Ascending aorta (tissue), 2 donors: ENCODE measurements at regions of chr17 and their contacts with region 1.

Region 1: DNA sequence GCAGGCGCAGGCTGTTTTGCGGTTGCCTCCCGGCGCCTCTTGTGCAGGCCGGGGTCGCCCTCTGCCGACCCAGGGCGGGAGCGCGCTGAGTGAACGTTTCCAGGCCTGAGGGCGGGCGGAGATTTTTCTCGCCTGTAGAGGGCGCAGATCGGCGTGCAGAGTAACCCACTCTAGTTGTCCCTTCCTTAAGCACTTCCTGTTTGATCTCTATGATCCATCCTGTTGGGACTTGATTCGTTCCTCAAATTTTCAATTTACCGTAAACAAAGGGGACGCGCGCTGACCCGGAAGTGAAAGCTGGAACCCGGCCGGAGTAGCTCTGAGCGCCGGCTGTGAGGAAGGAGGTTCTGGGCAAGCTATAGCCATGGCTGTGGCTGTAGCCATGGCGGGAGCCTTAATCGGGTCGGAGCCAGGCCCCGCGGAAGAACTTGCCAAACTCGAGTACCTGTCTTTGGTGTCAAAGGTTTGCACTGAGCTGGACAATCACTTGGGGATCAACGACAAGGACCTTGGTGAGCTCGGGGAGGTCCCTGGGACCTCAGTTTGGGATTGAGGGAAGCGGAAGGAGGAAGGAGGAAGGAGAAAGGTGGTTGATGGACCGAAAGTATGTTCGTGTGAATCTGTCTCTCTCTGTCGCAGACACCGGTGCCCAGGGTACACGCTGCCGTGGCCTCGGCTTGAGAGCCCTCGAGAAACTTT is at the start of gene DHX8:
- DNase-seq: peak; percentile 87 to 98
- H3K4me3 ChIP-seq: peak within 1 kb of the TSS; percentile 71 to 83
- H3K27ac ChIP-seq: peak within 1 kb of the TSS; percentile 71 to 80
- H3K4me1 ChIP-seq: peaks cover 3 to 24% of the 10 kb centered on the region in 2 donors
- H3K27me3 ChIP-seq: no peaks in the 10 kb centered on the region
- CTCF ChIP-seq: peak; percentile 100
- total RNA-seq, gene DHX8: 50.0 TPM

Region 2: DNA sequence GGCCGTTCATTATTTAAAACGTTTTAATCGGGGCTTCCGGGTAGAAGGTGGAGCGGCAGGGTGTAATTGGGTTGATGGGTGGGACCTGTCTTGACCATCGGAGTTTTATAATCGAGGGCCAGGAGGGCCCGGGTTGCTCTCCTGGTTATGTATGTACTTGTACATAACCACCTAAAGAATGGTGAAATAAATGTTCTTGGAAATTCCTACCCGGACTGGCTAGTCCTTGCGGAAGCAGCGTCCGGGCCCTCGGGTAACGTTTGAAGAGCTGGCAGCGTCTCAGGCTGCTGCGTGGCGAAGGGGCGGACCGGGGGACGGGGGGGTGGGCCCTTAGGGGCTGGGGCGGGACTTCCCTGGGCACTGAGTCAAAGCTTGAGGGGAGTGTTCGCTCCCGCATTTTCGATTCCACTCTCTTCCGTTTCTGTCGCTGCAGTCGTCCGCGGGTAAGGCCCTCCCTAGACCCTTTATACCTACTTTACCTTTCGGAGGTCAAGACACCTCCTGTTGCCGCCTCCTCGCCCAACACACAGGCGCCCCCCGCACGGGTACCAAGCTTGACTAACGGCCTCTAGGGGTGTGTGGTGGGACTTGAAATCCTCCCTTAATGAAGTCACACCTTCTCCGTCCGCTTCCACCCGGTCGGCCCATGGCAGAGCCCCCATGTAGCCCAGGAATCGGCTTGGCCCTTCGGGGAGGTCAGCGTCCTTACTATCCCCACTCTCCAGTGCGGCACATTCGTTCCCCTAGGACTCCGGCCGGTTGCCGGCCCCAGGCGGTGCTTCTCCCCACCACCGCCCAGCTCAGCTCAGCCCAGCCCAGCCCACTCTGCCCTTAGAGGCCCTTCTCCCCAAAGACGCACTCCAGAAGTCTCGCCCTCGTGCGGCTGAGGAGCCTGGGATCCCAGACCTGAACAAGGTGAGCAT is 272.1 kb before region 1 on chr17 and contains the start of gene TMEM106A:
- intact Hi-C with region 1: loop called (anchors 5 kb)
- DNase-seq: peak; percentile 39 to 89
- H3K4me3 ChIP-seq: peak within 1 kb of the TSS; percentile 74 to 76
- H3K27ac ChIP-seq: peak within 1 kb of the TSS; percentile 80 to 83
- H3K4me1 ChIP-seq: peaks cover 0 to 12% of the 10 kb centered on the region in 2 donors
- H3K27me3 ChIP-seq: no peaks in the 10 kb centered on the region
- CTCF ChIP-seq: peak; percentile 25 to 50 (median 47)
- total RNA-seq, gene TMEM106A: 18.5 TPM

Region 3: GRCh38 chr17:43316522-43317142 is 167.2 kb before region 1 on chr17:
- intact Hi-C with region 1: loop called (anchors 10 kb)
- DNase-seq: peak in 1 of 2 donors; percentile 63
- H3K4me3 ChIP-seq: no peak overlapping the region
- H3K27ac ChIP-seq: no peak overlapping the region
- H3K4me1 ChIP-seq: peaks cover 0 to 2% of the 10 kb centered on the region in 2 donors
- H3K27me3 ChIP-seq: no peaks in the 10 kb centered on the region
- CTCF ChIP-seq: no peak

Region 4: GRCh38 chr17:43367737-43368242 is 116.0 kb before region 1 on chr17:
- intact Hi-C with region 1: loop called (anchors 1 kb)
- DNase-seq: peak in 1 of 2 donors; percentile 66
- H3K4me3 ChIP-seq: peak overlapping the region; percentile 62 to 70
- H3K27ac ChIP-seq: peak overlapping the region; percentile 100
- H3K4me1 ChIP-seq: peaks cover 2 to 18% of the 10 kb centered on the region in 2 donors
- H3K27me3 ChIP-seq: no peaks in the 10 kb centered on the region
- CTCF ChIP-seq: no peak

Region 5: GRCh38 chr17:43393944-43394482 is 89.8 kb before region 1 on chr17:
- intact Hi-C with region 1: loop called (anchors 1 kb)
- DNase-seq: peak; percentile 46 to 96
- H3K4me3 ChIP-seq: peak overlapping the region in 1 of 2 donors; percentile 34
- H3K27ac ChIP-seq: peak overlapping the region; percentile 53 to 57
- H3K4me1 ChIP-seq: peaks cover 0 to 9% of the 10 kb centered on the region in 2 donors
- H3K27me3 ChIP-seq: no peaks in the 10 kb centered on the region
- CTCF ChIP-seq: peak; percentile 84 to 98 (median 92)

Region 6: DNA sequence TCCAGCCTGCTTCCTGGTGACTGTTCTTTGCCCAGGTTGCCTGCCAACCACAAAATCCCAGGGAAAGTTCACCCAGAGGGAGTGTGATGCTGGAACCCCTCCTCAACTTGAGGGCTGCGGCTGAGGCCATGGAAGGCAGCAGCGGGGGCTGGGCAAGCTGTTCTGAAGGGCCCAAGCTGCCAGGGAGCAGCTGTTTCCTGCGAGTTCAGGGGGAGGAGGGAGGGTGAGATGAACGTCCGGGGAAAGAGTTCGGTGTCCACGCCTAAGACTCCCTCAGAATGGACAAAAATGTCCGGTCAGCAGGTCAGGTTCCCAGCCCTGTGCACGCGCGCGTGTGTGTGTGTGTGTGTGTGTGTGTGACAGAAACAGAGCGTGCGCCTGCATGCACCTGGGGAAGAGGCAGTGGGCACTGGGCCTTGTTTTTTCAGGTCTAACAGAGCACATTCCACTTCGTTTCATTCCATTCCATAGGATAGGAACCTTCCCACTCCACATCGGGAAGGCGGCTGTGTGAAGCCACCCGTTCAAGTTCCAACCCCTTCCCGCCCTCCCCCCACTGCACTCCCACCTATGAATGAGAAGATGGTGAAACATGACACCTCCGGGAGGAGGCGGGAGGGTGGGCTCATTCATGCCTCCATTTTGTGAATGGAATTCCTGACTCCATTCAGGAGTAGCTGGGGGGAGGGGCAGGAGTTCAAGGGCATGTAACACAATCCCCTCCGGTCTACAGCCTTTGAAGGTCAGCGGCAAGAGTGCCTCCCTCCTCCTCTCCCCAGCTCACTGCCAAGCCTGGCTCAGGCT is 46.7 kb after region 1 on chr17:
- intact Hi-C with region 1: no loop called
- DNase-seq: peak in 1 of 2 donors; percentile 69
- H3K4me3 ChIP-seq: peak overlapping the region in 1 of 2 donors; percentile 47
- H3K27ac ChIP-seq: peak overlapping the region; percentile 40 to 65
- H3K4me1 ChIP-seq: peaks cover 0 to 10% of the 10 kb centered on the region in 2 donors
- H3K27me3 ChIP-seq: no peaks in the 10 kb centered on the region
- CTCF ChIP-seq: no peak

Region 7: DNA sequence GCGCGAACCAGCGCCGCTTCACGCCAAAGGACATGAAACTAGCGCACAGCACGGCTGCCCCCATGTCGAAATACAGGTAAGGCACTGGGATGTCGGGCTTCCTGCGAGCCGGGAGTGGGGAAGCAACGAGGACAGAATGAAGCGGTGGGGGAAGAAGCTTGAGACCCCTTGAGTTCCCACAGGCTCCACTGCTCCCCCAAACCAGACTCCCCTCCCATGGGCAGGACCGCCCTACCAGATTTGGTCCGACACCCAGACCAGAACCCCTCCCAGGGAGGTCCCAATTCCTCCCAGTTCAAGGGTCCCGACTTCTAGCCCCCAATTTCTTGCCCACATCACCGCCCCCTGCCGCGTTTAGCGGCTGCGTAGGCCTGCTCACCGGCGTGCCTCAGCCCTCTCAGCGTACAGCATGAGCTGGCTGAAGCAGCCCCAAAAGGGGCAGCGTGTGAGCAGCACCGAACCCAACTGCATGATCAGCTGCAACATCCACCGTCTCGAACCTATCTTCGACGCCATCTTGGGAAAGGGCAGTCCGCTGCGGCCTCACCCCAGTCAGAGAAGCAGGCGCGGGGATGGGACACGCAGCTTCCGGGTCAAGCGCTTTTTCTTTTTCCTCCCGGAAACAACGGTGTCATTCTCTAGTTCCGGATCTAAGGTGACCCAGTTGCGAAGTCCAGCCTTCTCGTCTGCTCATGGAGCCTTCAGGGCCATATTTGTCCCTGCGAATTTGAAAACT is 530.8 kb after region 1 on chr17 and contains the start of gene TMEM101:
- intact Hi-C with region 1: loop called (anchors 10 kb)
- DNase-seq: peak; percentile 50 to 95
- H3K4me3 ChIP-seq: peak within 1 kb of the TSS; percentile 73 to 83
- H3K27ac ChIP-seq: peak within 1 kb of the TSS; percentile 50 to 81
- H3K4me1 ChIP-seq: peaks cover 7 to 13% of the 10 kb centered on the region in 2 donors
- H3K27me3 ChIP-seq: no peaks in the 10 kb centered on the region
- CTCF ChIP-seq: no peak
- total RNA-seq, gene TMEM101: 11.0 TPM